ENCODE measurements at regions of chr2 and their contacts with region 1.

Region 1: DNA sequence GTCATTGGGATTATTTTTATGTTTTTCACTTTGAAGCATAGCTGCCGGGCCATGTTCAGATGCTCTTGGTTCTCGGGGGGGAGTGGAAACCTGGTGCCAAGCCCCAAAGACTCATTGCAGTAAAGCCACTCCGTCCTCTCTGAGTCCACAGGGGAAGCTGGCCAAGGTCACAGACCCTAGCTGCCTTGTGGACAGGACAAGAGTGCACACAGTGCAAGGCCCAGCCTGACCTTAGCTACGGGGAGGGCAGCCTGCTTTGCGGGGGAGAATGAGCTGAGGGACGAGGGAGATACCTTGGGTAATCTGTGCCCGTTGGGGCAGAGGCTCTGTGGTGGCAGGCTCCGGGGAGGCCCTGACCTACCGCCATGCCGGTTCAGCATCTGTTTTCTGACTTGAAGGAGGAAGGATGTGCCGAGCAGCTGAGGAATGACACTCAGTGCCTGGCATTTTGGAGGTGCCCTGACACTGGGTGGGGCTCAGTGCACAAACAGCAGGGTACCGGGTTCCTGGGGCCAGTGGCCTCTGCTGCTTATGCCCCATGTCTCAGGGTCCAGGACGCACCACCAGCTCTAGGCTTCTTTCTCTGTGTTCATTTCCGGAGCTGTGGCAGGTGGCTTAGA is 87.2 kb downstream of the STPG4 start:
- DNase-seq: no peak
- ATAC-seq: no peak
- H3K4me3 ChIP-seq: no peak overlapping the region
- H3K4me3 Mint-ChIP-seq: no peak overlapping the region
- H3K27ac ChIP-seq: no peak overlapping the region
- H3K27ac Mint-ChIP-seq: peak overlapping the region; percentile 68 to 69
- H3K4me1 ChIP-seq: peaks cover 12 to 45% of the 10 kb centered on the region in 2 experiments
- H3K4me1 Mint-ChIP-seq: peaks cover 47 to 61% (median 58%) of the 10 kb centered on the region in 3 donors
- H3K27me3 ChIP-seq: no peaks in the 10 kb centered on the region
- H3K27me3 Mint-ChIP-seq: no peaks in the 10 kb centered on the region

Region 2: GRCh38 chr2:47719099-47719498 is 651.2 kb after region 1 on chr2:
- CTCF ChIA-PET with region 1: no interaction called
- POLR2A ChIA-PET with region 1: interaction called in 1 of 2 experiments, 20 read pairs
- DNase-seq: no peak
- ATAC-seq: no peak
- H3K4me3 ChIP-seq: no peak overlapping the region
- H3K4me3 Mint-ChIP-seq: no peak overlapping the region
- H3K27ac ChIP-seq: no peak overlapping the region
- H3K27ac Mint-ChIP-seq: no peak overlapping the region
- H3K4me1 ChIP-seq: no peaks in the 10 kb centered on the region
- H3K4me1 Mint-ChIP-seq: peaks cover 0 to 4% (median 2%) of the 10 kb centered on the region in 3 donors
- H3K27me3 ChIP-seq: no peaks in the 10 kb centered on the region
- H3K27me3 Mint-ChIP-seq: no peaks in the 10 kb centered on the region